H1 (cell line): ENCODE measurements at regions of chr7 and their contacts with region 1.

Region 1: DNA sequence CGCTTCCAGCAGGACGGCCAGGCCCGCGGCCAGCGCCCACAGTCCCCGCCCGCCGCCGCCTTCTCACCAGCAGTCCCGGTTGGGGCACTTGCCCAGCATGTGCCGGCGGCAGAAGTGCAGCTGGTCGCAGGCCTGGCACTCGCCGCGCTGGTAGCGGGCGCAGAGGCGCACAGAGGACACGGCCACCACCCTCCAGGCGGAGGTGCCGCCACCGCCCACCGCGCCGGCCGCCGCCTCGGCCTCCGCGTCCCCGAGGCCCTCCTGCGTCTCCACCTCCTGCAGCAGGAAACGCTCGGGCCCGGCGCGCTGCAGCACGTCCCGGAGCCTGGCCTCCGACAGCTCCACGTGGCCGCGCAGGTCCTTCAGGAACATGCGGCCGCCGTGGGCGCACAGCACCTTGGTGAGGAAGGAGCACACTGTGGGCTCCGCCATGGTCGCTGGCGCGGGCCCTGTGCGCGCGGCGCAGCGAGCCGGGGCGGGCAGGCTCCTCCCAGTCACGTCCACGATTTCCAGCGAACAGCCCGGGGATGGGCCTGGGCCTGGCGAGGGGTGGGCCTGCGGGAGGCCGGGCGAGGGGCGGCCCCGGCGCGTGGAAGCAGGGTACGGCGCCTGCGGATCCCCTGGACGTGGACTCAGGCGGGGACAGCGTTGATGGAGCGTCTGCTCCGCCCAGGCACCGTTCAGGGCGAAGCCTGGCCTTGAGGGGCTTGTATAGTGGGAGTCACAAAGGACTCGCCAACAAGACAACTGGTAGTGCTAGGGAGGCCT is at the start of gene ZC3HAV1L:
- DNase-seq: peak in 1 of 2 experiments; percentile 80
- H3K4me3 ChIP-seq: peak within 1 kb of the TSS; percentile 66 to 77 (median 74)
- H3K27ac ChIP-seq: 0 out of 2 replicates have a peak within 1 kb of the TSS, but pooled peaks have one; percentile 30
- H3K4me1 ChIP-seq: peaks cover 5 to 9% (median 7%) of the 10 kb centered on the region in 4 experiments; a peak in 5 of 7 replicates
- H3K27me3 ChIP-seq: peaks cover 0 to 2% (median 0%) of the 10 kb centered on the region in 4 experiments; a peak in 2 of 7 replicates
- CTCF ChIP-seq: no peak
- EP300 ChIP-seq: no peak
- POLR2A ChIP-seq: peak; percentile 28 to 35; a peak in 2 of 3 replicates
- RAD21 ChIP-seq: no peak
- total RNA-seq, gene ZC3HAV1L: 7.0 and 7.1 TPM in 2 replicates

Region 2: GRCh38 chr7:139058943-139059342 is 23.2 kb after region 1 on chr7:
- CTCF ChIA-PET with region 1: interaction called, 6 read pairs
- POLR2A ChIA-PET with region 1: interaction called, 12 read pairs
- DNase-seq: no peak
- H3K4me3 ChIP-seq: no peak overlapping the region
- H3K27ac ChIP-seq: no peak overlapping the region
- H3K4me1 ChIP-seq: no peaks in the 10 kb centered on the region
- H3K27me3 ChIP-seq: no peaks in the 10 kb centered on the region
- CTCF ChIP-seq: no peak
- EP300 ChIP-seq: no peak
- POLR2A ChIP-seq: no peak
- RAD21 ChIP-seq: no peak